ENCODE measurements at regions of chr22 and their contacts with region 1.

Region 1: DNA sequence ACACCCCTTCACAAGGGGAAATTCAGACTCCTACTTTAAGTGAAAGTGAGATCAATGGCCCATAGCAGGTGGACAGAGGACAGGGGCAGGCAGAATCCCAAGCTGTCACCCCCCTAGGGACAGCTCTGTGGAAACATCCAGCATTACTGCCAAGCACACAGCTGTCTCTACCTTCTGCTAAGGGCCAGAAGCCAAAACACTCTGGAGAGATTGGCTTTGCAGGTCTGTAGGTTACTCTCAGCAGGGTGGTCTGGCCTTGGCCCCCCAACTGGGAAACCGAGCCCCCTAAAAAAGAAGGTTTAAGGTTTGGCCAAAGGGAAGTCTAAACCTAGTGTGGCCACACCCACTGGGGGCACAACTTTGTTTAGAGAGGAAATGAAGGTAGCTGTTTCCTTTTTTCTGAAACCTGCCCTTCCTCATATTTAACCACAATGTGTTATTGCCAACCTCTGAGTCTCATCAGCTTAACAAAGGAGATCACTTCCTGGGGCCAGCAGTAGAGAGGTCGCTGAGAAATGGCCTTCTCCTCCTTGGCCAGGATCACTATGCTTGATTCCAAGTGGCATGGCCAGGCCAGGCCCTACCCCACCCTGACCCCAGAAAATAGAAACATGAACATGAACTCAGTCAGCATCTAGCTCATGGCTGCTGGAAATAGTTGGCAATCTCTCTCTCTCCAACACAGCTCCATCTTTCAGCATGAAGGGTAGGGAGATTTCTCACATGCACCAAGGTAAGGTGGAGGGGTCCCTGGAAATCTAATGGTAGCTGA is 25.9 kb upstream of the SCARF2 start:
- DNase-seq: peak; percentile 47 to 67 (median 64)
- H3K4me3 ChIP-seq: peak overlapping the region in 1 of 2 donors; percentile 54
- H3K4me3 Mint-ChIP-seq: peak overlapping the region; percentile 0 to 84 (median 79)
- H3K27ac ChIP-seq: peak overlapping the region; percentile 65
- H3K27ac Mint-ChIP-seq: peak overlapping the region; percentile 94 to 99 (median 97)
- H3K4me1 ChIP-seq: peaks cover 67% of the 10 kb centered on the region
- H3K4me1 Mint-ChIP-seq: peaks cover 44 to 79% (median 58%) of the 10 kb centered on the region in 4 donors
- H3K27me3 ChIP-seq: no peaks in the 10 kb centered on the region
- H3K27me3 Mint-ChIP-seq: no peaks in the 10 kb centered on the region

Region 2: DNA sequence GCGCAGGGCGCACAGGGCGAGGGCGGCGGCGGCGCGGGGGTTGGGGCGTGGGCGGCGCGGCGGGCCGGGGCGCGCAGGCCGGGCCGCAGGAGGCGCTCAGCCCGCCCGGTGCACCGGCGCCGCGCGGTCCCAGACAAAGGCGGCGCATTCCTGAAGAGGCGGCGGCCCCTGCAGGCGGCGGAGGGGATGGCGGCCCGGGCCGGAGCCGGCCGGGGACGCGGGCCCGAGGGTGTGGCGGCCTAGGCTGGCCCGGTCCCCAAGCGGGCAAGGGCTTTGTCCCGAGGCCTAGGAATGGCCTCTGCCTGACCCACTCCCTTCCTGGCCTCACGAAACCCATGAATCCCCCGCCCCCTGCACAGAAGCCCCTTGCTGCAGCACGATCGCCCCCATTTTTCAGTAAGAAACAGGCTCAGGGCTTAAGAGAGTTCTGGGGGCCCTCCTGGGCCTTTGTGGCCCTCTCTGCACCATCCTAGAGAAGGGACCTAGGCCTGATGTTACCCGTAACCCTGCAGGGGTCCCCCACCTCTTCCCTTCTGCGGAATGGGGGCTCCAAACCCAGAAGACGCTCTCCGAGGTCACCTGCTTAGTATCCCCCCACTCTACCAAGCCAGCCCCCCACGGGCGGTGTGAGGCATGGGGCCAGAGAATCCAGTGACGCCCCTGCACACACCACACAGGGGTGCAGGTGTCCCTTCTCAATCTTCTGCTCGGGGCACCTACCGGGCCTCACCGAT is 195.1 kb before region 1 on chr22 and contains the start of gene RTN4R:
- CTCF ChIA-PET with region 1: no interaction called
- POLR2A ChIA-PET with region 1: no interaction called
- intact Hi-C with region 1: no loop called
- DNase-seq: peak; percentile 38 to 59 (median 46)
- H3K4me3 ChIP-seq: no peak within 1 kb of the TSS
- H3K4me3 Mint-ChIP-seq: peak within 1 kb of the TSS; percentile 68 to 84 (median 78)
- H3K27ac ChIP-seq: no peak within 1 kb of the TSS
- H3K27ac Mint-ChIP-seq: peak within 1 kb of the TSS in 3 of 7 donors; percentile 46 to 77 (median 74)
- H3K4me1 ChIP-seq: peaks cover 8% of the 10 kb centered on the region
- H3K4me1 Mint-ChIP-seq: peaks cover 0 to 12% (median 6%) of the 10 kb centered on the region in 4 donors
- H3K27me3 ChIP-seq: no peaks in the 10 kb centered on the region
- H3K27me3 Mint-ChIP-seq: peaks cover 0 to 1% of the 10 kb centered on the region in 2 donors
- total RNA-seq, gene RTN4R: 2.1 to 2.7 TPM

Region 3: DNA sequence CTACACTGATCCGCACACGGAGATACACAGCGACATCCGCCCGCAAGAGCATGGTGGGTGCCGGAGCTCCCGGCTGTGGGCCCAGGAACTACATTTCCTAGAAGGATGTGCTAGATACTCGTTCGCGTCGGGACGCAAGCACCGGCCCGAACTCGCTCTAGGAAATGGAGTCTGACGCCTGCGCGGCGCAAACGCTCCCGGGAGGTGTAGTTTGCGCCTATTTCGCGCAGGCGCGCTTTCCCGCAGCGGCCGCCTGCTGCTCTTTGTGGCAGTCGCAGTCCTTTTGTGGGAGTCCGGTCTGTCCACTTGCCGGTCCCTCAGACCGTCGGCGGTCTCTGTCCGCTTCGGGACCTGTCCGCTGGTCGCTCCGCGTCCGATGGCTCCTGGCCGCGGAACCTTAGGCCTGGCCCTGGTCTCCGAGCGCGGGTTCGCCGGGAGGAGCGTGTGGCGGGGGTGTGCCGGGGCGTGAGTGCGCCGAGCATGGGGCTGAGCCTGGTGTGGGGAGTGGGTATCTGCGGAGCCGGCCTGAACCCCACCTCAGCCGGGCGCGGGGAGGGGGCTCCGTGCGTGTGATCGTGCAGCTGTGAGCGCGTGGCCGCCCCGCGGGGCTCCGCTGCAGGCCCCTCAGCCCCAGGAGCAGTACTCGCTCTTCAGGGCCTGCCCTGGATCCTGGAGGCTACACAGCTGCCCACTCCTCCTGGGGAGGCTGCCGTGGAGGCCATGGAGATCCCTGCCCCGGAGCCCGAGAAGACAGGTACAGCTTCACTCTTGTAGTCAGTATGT is 69.4 kb before region 1 on chr22 and contains the start of gene ZNF74:
- CTCF ChIA-PET with region 1: interaction called, 3 read pairs
- POLR2A ChIA-PET with region 1: interaction called, 18 read pairs
- intact Hi-C with region 1: no loop called
- DNase-seq: peak; percentile 86 to 91 (median 87)
- H3K4me3 ChIP-seq: peak within 1 kb of the TSS; percentile 66 to 75
- H3K4me3 Mint-ChIP-seq: peak within 1 kb of the TSS; percentile 86 to 95 (median 89)
- H3K27ac ChIP-seq: peak within 1 kb of the TSS; percentile 62
- H3K27ac Mint-ChIP-seq: peak within 1 kb of the TSS; percentile 76 to 96 (median 91)
- H3K4me1 ChIP-seq: peaks cover 24% of the 10 kb centered on the region
- H3K4me1 Mint-ChIP-seq: peaks cover 18 to 46% (median 30%) of the 10 kb centered on the region in 4 donors
- H3K27me3 ChIP-seq: no peaks in the 10 kb centered on the region
- H3K27me3 Mint-ChIP-seq: no peaks in the 10 kb centered on the region
- total RNA-seq, gene ZNF74: 16.5 to 17.4 TPM

Region 4: DNA sequence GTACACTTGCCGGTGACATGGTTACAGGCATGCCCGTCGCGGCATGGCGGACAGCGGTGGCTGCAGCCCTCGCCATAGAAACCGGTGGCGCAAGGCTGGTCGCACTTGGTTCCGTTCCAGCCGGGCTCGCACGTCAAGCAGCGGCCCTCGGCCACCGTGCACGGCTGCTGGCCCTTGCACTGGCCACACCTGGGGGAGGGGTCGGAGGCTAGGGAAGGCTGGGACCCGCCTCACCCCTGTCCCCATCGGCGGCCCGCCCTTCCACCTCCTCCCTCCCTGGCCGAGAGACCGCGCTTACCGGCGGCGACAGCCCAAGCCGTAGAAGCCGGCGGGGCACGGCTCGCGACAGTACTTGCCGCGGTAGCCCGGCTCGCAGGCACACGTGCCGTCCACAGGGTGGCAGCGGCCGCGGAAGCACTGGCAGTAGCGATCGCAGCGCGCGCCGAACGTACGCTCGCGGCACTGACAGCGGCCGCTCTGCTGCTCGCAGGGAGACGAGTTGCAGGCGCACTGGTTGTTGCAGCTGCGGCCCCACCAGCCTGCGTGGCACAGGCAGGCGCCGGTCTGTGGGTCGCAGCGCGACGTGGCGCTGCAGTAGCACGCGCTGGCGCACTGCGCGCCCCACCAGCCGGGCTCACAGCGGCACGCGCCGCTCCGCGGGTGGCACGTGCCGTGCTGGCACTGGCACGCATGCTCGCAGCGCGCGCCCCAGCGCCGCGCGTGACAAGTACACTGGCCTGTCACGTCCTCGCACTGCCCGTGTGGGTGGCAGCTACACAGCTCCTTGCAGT is 32.6 kb before region 1 on chr22:
- CTCF ChIA-PET with region 1: interaction called, 4 read pairs
- POLR2A ChIA-PET with region 1: interaction called, 52 read pairs
- intact Hi-C with region 1: loop called (anchors 1 kb)
- DNase-seq: peak; percentile 61 to 72 (median 68)
- H3K4me3 ChIP-seq: peak overlapping the region in 1 of 2 donors; percentile 65
- H3K4me3 Mint-ChIP-seq: peak overlapping the region; percentile 67 to 91 (median 88)
- H3K27ac ChIP-seq: no peak overlapping the region
- H3K27ac Mint-ChIP-seq: no peak overlapping the region
- H3K4me1 ChIP-seq: peaks cover 37% of the 10 kb centered on the region
- H3K4me1 Mint-ChIP-seq: peaks cover 10 to 49% (median 18%) of the 10 kb centered on the region in 4 donors
- H3K27me3 ChIP-seq: peaks cover 19% of the 10 kb centered on the region
- H3K27me3 Mint-ChIP-seq: peaks cover 20% of the 10 kb centered on the region in 2 donors

Region 5: DNA sequence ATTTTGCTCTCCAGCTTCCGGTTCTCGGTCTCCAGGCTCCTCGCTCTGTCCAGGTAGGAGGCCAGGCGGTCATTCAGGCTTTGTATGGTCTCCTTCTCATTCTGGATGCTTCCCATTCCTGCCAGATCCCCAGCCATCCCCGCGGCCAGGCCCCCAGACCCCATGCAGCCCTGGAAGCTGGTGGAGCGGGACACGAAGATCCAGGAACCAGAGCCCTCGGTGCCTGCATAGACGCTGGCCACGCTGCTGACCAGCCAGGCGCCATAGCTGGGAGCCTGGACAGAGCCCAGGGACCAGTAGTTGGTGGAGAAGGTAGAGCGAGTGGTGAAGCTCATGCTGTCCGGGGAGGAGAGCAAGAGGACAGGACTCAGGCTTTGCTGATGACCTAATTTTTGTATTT is 20.3 kb after region 1 on chr22:
- CTCF ChIA-PET with region 1: interaction called, 4 read pairs
- POLR2A ChIA-PET with region 1: interaction called, 93 read pairs
- intact Hi-C with region 1: no loop called
- DNase-seq: no peak
- H3K4me3 ChIP-seq: no peak overlapping the region
- H3K4me3 Mint-ChIP-seq: no peak overlapping the region
- H3K27ac ChIP-seq: no peak overlapping the region
- H3K27ac Mint-ChIP-seq: no peak overlapping the region
- H3K4me1 ChIP-seq: peaks cover 20% of the 10 kb centered on the region
- H3K4me1 Mint-ChIP-seq: peaks cover 25 to 43% (median 32%) of the 10 kb centered on the region in 4 donors
- H3K27me3 ChIP-seq: no peaks in the 10 kb centered on the region
- H3K27me3 Mint-ChIP-seq: no peaks in the 10 kb centered on the region

Region 6: DNA sequence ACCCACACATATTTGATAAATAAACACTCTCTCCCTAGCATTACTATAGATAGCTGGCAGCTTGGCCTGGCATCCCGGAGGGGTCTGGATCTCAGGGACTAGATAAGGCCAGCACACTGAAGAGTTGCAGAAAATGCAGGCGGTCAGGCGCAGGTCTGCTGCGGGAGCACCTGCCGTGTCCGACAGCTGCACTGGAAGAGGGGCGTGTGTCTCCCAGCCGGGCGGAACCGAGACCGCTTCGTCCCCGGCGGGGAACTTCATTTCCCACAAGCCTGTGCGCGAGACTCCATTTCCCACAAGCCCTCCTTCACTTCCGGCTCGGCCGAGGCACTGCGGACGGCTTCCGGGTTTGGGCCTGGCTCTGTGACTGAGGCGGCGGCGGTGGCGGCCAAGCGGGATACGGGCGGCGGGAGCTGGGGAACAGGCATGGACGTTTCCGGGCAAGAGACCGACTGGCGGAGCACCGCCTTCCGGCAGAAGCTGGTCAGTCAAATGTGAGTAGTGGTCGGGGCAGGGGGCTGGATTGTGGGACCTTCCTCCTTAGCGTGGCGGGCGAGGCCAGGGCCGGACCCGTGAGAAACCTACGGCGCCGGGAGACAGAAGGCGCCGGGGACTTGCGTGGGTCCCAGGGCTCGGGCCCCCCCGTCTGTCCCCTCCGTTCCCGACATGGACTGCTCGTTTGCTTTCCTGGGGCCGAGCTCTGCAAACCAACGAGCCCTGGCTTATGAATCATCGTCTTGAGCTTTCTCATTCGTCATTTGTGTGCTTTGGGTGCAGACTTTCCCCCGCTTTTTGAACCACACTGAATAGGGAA is 44.0 kb after region 1 on chr22 and contains the start of gene MED15:
- CTCF ChIA-PET with region 1: interaction called, 6 read pairs
- POLR2A ChIA-PET with region 1: interaction called, 44 read pairs
- intact Hi-C with region 1: no loop called
- DNase-seq: peak; percentile 82 to 90 (median 84)
- H3K4me3 ChIP-seq: peak within 1 kb of the TSS; percentile 85 to 98
- H3K4me3 Mint-ChIP-seq: peak within 1 kb of the TSS; percentile 93 to 99 (median 97)
- H3K27ac ChIP-seq: peak within 1 kb of the TSS; percentile 93
- H3K27ac Mint-ChIP-seq: peak within 1 kb of the TSS; percentile 86 to 99 (median 96)
- H3K4me1 ChIP-seq: peaks cover 50% of the 10 kb centered on the region
- H3K4me1 Mint-ChIP-seq: peaks cover 42 to 57% (median 50%) of the 10 kb centered on the region in 4 donors
- H3K27me3 ChIP-seq: no peaks in the 10 kb centered on the region
- H3K27me3 Mint-ChIP-seq: no peaks in the 10 kb centered on the region
- total RNA-seq, gene MED15: 225 to 237 TPM

Region 7: GRCh38 chr22:20568989-20569769 is 105.7 kb after region 1 on chr22:
- CTCF ChIA-PET with region 1: interaction called, 27 read pairs
- POLR2A ChIA-PET with region 1: interaction called, 84 read pairs
- intact Hi-C with region 1: loop called (anchors 1 kb)
- DNase-seq: peak; percentile 91 to 94 (median 93)
- H3K4me3 ChIP-seq: peak overlapping the region; percentile 14 to 47
- H3K4me3 Mint-ChIP-seq: peak overlapping the region; percentile 79 to 95 (median 89)
- H3K27ac ChIP-seq: peak overlapping the region; percentile 54
- H3K27ac Mint-ChIP-seq: peak overlapping the region; percentile 97 to 99 (median 99)
- H3K4me1 ChIP-seq: peaks cover 85% of the 10 kb centered on the region
- H3K4me1 Mint-ChIP-seq: peaks cover 56 to 95% (median 78%) of the 10 kb centered on the region in 4 donors
- H3K27me3 ChIP-seq: no peaks in the 10 kb centered on the region
- H3K27me3 Mint-ChIP-seq: no peaks in the 10 kb centered on the region